Caco-2 (cell line): ENCODE measurements at regions of chr1 and their contacts with region 1.

Region 1: GRCh38 chr1:76901158-76901767 is 34.0 kb downstream of the ST6GALNAC5 start:
- DNase-seq: peak; percentile 41 to 51
- H3K4me3 ChIP-seq: no peak overlapping the region
- H3K4me3 Mint-ChIP-seq: no peak overlapping the region
- H3K27ac Mint-ChIP-seq: no peak overlapping the region
- H3K4me1 ChIP-seq: no peaks in the 10 kb centered on the region
- H3K4me1 Mint-ChIP-seq: no peaks in the 10 kb centered on the region
- H3K27me3 ChIP-seq: no peaks in the 10 kb centered on the region
- H3K27me3 Mint-ChIP-seq: peaks cover 16% of the 10 kb centered on the region
- CTCF ChIP-seq: peak; percentile 51 to 57

Region 2: GRCh38 chr1:76593618-76594017 is 307.6 kb before region 1 on chr1:
- CTCF ChIA-PET with region 1: no interaction called
- POLR2A ChIA-PET with region 1: no interaction called
- intact Hi-C with region 1: no loop called
- DNase-seq: no peak
- H3K4me3 ChIP-seq: no peak overlapping the region
- H3K4me3 Mint-ChIP-seq: no peak overlapping the region
- H3K27ac Mint-ChIP-seq: no peak overlapping the region
- H3K4me1 ChIP-seq: no peaks in the 10 kb centered on the region
- H3K4me1 Mint-ChIP-seq: peaks cover 7% of the 10 kb centered on the region
- H3K27me3 ChIP-seq: no peaks in the 10 kb centered on the region
- H3K27me3 Mint-ChIP-seq: no peaks in the 10 kb centered on the region
- CTCF ChIP-seq: no peak

Region 3: DNA sequence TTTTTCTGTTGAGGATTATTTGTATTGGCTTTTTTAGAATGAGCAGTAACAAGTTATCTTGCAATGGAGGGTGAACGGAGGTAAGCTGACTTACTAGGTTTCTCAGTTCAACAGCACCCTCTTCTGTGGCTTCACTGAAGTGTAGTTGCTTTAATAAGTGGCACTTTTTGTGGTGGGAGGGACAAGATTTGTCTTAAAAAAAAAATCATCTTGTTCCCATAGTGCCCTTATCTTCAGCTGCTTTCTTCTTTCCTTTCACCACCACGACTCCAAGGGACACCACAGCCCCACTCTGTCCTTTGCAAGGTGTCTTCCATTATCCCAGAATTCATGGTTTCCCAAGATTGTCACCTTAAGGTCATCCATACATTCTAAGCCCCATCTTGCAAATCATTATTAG is 225.0 kb after region 1 on chr1:
- CTCF ChIA-PET with region 1: no interaction called
- POLR2A ChIA-PET with region 1: no interaction called
- intact Hi-C with region 1: loop called (anchors 1 kb)
- DNase-seq: peak in 1 of 2 experiments; percentile 30
- H3K4me3 ChIP-seq: no peak overlapping the region
- H3K4me3 Mint-ChIP-seq: no peak overlapping the region
- H3K27ac Mint-ChIP-seq: no peak overlapping the region
- H3K4me1 ChIP-seq: no peaks in the 10 kb centered on the region
- H3K4me1 Mint-ChIP-seq: no peaks in the 10 kb centered on the region
- H3K27me3 ChIP-seq: no peaks in the 10 kb centered on the region
- H3K27me3 Mint-ChIP-seq: no peaks in the 10 kb centered on the region
- CTCF ChIP-seq: peak in 1 of 2 experiments; percentile 42

Region 4: DNA sequence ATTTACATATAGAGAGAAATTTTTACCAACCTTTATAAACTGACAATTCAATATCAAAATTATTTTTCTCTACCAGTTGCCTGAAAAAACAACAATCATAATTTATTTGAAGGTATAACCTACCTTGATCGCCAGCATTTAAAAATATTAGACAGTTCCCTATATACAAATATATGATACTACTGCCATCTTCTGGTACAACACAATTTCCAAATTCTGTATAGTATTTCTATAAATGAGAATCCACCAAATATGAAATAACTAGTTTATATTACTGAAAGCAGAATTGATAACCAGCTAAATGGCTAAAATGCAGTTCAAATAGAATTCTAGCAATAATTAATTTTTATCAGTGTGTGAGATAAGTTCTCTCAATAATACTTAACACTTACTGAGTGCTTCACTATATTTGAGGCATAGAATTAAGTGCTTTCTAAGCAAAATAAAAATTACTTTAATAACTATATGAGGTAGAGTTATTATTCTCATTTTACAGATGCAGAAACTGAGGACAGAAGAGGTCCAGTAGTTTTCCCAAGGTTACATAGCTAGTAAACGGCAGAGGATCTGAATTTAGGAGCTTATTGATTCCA is 242.4 kb after region 1 on chr1:
- CTCF ChIA-PET with region 1: no interaction called
- POLR2A ChIA-PET with region 1: no interaction called
- intact Hi-C with region 1: loop called (anchors 1 kb)
- DNase-seq: no peak
- H3K4me3 ChIP-seq: no peak overlapping the region
- H3K4me3 Mint-ChIP-seq: no peak overlapping the region
- H3K27ac Mint-ChIP-seq: no peak overlapping the region
- H3K4me1 ChIP-seq: no peaks in the 10 kb centered on the region
- H3K4me1 Mint-ChIP-seq: no peaks in the 10 kb centered on the region
- H3K27me3 ChIP-seq: no peaks in the 10 kb centered on the region
- H3K27me3 Mint-ChIP-seq: no peaks in the 10 kb centered on the region
- CTCF ChIP-seq: peak in 1 of 2 experiments; percentile 21

Region 5: GRCh38 chr1:77514921-77515776 is 613.9 kb after region 1 on chr1:
- CTCF ChIA-PET with region 1: no interaction called
- POLR2A ChIA-PET with region 1: no interaction called
- intact Hi-C with region 1: no loop called
- DNase-seq: peak in 1 of 2 experiments; percentile 17
- H3K4me3 ChIP-seq: no peak overlapping the region
- H3K4me3 Mint-ChIP-seq: no peak overlapping the region
- H3K27ac Mint-ChIP-seq: no peak overlapping the region
- H3K4me1 ChIP-seq: no peaks in the 10 kb centered on the region
- H3K4me1 Mint-ChIP-seq: no peaks in the 10 kb centered on the region
- H3K27me3 ChIP-seq: no peaks in the 10 kb centered on the region
- H3K27me3 Mint-ChIP-seq: no peaks in the 10 kb centered on the region
- CTCF ChIP-seq: peak in 1 of 2 experiments; percentile 5